AG04450 (cell line): ENCODE measurements at regions of chr4 and their contacts with region 1.

Region 1: DNA sequence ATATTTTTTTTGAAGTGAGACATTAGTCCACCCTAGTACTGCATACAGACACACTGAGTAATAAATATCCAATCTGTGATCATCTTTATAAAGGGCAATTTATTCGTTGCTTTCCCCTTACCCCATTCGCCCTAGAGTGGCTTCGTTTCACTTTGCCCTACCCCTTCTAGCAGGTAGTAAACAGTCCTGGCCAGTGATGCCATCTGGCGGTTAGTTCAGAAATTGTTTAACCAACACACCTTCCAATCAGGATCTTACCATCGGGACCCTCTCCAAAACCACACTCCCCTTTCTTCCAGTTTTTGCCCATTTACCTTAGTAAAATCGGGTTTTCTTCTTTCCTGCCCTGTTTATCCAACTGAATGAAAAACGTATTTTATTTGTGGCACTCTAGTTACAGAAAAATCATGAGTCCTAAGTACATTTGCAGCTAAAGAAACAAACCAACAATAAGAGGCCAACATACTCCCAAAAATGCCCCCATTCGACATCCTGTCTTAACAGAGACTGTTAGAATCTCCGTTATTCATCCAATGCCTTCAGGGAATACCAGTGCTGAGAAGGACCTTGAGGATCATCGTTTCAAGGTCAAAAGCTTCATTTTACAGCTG is 2.2 kb downstream of the PPA2 start:
- DNase-seq: peak; percentile 48
- H3K4me3 ChIP-seq: peak overlapping the region; percentile 81
- H3K27ac ChIP-seq: no peak overlapping the region
- H3K27me3 ChIP-seq: no peaks in the 10 kb centered on the region
- CTCF ChIP-seq: peak; percentile 85

Region 2: DNA sequence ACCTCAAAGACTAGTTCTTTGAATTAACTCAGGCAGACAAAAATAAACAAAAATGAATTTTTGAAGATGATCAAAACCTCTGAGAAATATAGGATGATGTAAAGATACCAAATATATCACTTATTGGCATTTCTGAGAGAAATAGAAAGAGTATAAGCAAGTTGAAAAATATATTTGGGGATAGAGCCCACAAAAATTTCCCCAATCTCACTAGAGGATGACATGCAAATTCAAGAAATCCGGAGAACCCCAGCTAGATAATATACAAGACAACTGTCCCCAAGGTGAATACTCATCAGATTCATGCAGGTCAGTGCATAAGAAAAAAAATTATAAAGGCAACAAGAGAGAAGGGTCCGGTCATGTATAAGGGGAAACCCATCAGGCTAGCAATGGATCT is 1106.1 kb before region 1 on chr4:
- CTCF ChIA-PET with region 1: no interaction called
- POLR2A ChIA-PET with region 1: no interaction called
- DNase-seq: no peak
- H3K4me3 ChIP-seq: no peak overlapping the region
- H3K27ac ChIP-seq: no peak overlapping the region
- H3K27me3 ChIP-seq: no peaks in the 10 kb centered on the region
- CTCF ChIP-seq: no peak

Region 3: DNA sequence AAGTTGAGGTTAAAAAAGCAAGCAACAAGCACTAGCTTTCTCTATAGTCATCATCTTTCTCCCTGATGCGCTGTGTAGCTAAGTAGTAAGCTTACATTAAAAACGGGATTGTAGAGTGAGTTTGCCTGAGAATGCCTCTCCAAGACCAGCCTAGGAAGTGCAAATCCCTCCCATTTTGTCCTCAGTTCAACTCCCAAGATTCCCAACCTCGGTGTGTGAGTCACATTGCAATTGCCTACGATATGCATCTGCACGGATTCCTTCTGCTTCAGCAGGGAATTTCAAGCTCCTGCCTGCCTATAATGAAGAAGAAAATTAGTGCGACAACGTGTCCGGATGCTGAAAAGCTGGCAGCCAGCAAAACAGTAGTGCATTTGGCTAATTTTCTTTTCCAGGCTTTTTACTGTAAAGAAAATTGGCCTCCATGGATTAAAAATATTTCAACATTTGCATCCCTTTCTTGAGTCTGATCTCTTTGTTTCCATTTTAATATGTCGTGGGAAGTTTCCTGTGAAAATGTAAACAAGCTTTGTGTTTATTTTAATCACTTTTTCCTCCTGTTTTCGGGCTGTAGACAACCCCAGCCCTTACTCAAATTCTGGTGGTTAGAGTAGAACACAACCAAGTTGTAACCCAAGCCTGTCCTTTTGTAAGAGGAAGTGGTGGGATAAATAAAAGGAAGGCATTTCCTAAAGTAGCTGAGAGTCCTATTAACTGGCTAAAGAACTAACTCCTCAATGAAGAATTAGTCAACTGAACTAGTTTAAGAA is 383.4 kb before region 1 on chr4:
- CTCF ChIA-PET with region 1: interaction called, 13 read pairs
- POLR2A ChIA-PET with region 1: interaction called, 5 read pairs
- DNase-seq: peak; percentile 94
- H3K4me3 ChIP-seq: peak overlapping the region; percentile 49
- H3K27ac ChIP-seq: peak overlapping the region; percentile 92
- H3K27me3 ChIP-seq: no peaks in the 10 kb centered on the region
- CTCF ChIP-seq: no peak

Region 4: GRCh38 chr4:105146276-105147015 is 325.2 kb before region 1 on chr4 and contains the start of gene TET2:
- CTCF ChIA-PET with region 1: interaction called, 38 read pairs
- POLR2A ChIA-PET with region 1: interaction called, 5 read pairs
- DNase-seq: peak; percentile 44
- H3K4me3 ChIP-seq: peak within 1 kb of the TSS; percentile 95
- H3K27ac ChIP-seq: peak within 1 kb of the TSS; percentile 92
- H3K27me3 ChIP-seq: no peaks in the 10 kb centered on the region
- CTCF ChIP-seq: no peak
- polyA plus RNA-seq, gene TET2: 12.4 and 16.2 TPM in 2 replicates

Region 5: GRCh38 chr4:105437637-105438036 is 34.0 kb before region 1 on chr4:
- CTCF ChIA-PET with region 1: no interaction called
- POLR2A ChIA-PET with region 1: no interaction called
- DNase-seq: no peak
- H3K4me3 ChIP-seq: no peak overlapping the region
- H3K27ac ChIP-seq: no peak overlapping the region
- H3K27me3 ChIP-seq: no peaks in the 10 kb centered on the region
- CTCF ChIP-seq: no peak

Region 6: DNA sequence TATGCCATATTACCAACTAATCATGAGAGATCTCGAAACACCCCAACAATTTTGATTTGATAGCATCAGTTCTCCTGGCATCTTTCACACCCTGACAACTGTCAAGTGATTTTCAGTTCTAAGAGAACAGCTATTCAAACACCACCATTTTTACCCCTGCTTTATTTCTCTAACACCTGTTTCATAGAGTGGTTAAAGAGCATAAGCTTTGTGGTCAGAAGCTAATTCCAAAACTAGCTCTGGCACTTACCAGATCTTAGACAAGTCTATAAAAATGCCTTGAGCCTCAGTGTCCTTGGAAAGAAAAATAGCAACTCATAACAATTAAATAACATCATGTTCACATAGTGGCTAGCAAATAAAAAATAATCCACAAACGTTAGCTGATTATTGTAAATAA is 15.7 kb before region 1 on chr4:
- CTCF ChIA-PET with region 1: interaction called, 16 read pairs
- POLR2A ChIA-PET with region 1: interaction called, 3 read pairs
- DNase-seq: no peak
- H3K4me3 ChIP-seq: no peak overlapping the region
- H3K27ac ChIP-seq: no peak overlapping the region
- H3K27me3 ChIP-seq: no peaks in the 10 kb centered on the region
- CTCF ChIP-seq: no peak

Region 7: GRCh38 chr4:105483840-105484239 is 12.2 kb after region 1 on chr4:
- CTCF ChIA-PET with region 1: interaction called, 15 read pairs
- POLR2A ChIA-PET with region 1: no interaction called
- DNase-seq: no peak
- H3K4me3 ChIP-seq: no peak overlapping the region
- H3K27ac ChIP-seq: no peak overlapping the region
- H3K27me3 ChIP-seq: no peaks in the 10 kb centered on the region
- CTCF ChIP-seq: no peak